PC-3 (cell line): ENCODE measurements at regions of chr12 and their contacts with region 1.

Region 1: DNA sequence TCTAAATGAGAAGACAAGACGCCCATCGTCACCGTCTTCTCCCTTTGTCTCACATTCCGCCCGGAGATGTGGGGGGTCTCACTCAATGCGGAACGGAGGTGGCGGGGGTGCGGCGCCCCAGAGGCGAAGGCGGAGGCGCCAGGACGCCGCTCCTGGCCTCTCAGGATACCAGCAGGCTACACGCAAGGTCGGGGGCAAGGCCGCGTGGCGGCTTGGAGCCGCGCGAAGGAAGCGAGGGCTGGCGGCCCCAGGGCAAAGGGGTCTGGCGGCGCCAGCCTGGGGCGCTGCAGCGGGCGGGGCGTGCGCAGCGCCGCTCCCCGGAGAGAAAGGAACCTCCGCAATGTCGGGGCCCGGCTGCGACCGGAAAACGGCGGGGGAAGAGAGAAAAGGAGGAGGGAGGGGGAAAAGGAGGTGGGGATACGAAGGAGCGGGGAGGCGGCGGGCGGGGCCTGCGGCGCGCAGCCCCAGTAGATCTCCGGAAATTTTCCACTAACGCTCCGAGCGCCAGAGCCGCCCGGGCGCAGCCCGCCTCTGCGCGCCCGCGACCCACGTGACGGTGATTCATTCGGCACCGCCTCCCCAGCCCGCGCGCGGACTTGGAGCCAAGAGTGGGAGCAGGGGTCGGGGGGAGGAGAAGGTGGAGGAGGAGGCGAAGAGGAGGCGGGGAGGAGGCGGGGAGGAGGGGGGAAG is 10.5 kb upstream of the SLC38A2 start:
- DNase-seq: peak; percentile 98
- ATAC-seq: peak; percentile 62
- H3K4me3 ChIP-seq: peak overlapping the region; percentile 77
- H3K27ac ChIP-seq: peak overlapping the region; percentile 94
- H3K4me1 ChIP-seq: peaks cover 44% of the 10 kb centered on the region
- H3K27me3 ChIP-seq: no peaks in the 10 kb centered on the region
- CTCF ChIP-seq: peak; percentile 40; the same call in 1 of the 2 replicates

Region 2: GRCh38 chr12:46268590-46269558 is 114.2 kb before region 1 on chr12 and contains the start of gene SLC38A1:
- CTCF ChIA-PET with region 1: no interaction called
- POLR2A ChIA-PET with region 1: interaction called, 14 read pairs
- intact Hi-C with region 1: no loop called
- DNase-seq: peak; percentile 91
- ATAC-seq: peak; percentile 68
- H3K4me3 ChIP-seq: peak within 1 kb of the TSS; percentile 85
- H3K27ac ChIP-seq: peak within 1 kb of the TSS; percentile 81
- H3K4me1 ChIP-seq: peaks cover 39% of the 10 kb centered on the region
- H3K27me3 ChIP-seq: no peaks in the 10 kb centered on the region
- CTCF ChIP-seq: no peak
- total RNA-seq, gene SLC38A1: 101 and 107 TPM in 2 replicates

Region 3: DNA sequence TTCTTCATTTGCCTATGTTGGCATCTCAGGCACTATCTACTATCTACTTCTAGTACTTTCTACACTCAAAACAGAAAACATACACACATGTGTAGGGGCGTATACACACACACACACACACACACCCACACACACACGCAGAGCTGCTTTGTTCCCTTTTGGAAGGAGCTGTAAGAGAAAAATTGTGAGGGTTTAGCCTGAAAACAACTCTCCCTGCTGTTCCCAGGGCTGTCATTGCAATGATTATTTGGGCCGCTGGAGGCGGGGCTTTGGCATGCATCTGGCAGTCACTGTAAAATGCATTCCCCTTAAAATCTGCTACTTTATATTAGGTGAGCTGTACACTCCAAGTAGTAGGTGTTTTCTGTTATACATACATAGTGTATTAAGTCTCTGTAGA is 18.6 kb after region 1 on chr12:
- CTCF ChIA-PET with region 1: no interaction called
- POLR2A ChIA-PET with region 1: interaction called, 9 read pairs
- intact Hi-C with region 1: loop called (anchors 2 kb)
- DNase-seq: no peak
- ATAC-seq: peak; percentile 33
- H3K4me3 ChIP-seq: no peak overlapping the region
- H3K27ac ChIP-seq: peak overlapping the region; percentile 40
- H3K4me1 ChIP-seq: peaks cover 28% of the 10 kb centered on the region
- H3K27me3 ChIP-seq: no peaks in the 10 kb centered on the region
- CTCF ChIP-seq: no peak

Region 4: GRCh38 chr12:46442239-46442638 is 59.1 kb after region 1 on chr12:
- CTCF ChIA-PET with region 1: no interaction called
- POLR2A ChIA-PET with region 1: interaction called, 12 read pairs
- intact Hi-C with region 1: loop called (anchors 1 kb)
- DNase-seq: peak; percentile 64
- ATAC-seq: peak; percentile 43
- H3K4me3 ChIP-seq: peak overlapping the region; percentile 50
- H3K27ac ChIP-seq: peak overlapping the region; percentile 97
- H3K4me1 ChIP-seq: peaks cover 75% of the 10 kb centered on the region
- H3K27me3 ChIP-seq: no peaks in the 10 kb centered on the region
- CTCF ChIP-seq: no peak

Region 5: DNA sequence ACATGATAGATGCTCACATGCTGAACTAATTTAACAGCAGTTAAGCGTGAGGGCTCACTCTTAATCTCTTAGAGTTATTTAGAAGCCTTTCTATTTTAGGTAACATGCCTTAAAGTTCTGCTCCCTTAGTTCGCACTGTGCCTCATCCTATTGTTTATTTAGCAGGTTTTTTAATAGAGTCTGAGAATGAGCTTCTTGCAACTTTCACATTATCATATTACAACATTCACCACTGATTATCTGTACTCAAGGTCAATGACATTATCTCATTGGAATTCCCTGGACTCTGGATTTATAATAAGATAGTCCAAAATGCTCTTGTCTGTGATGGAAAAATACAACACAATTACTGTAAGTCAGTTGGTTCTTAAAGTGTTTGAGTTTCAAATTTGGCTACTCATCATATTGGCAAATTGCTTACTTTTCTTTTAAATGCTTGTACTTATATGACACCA is 173.0 kb after region 1 on chr12:
- CTCF ChIA-PET with region 1: no interaction called
- POLR2A ChIA-PET with region 1: interaction called, 8 read pairs
- intact Hi-C with region 1: loop called (anchors 2 kb)
- DNase-seq: peak; percentile 93
- ATAC-seq: peak; percentile 76
- H3K4me3 ChIP-seq: peak overlapping the region; percentile 41
- H3K27ac ChIP-seq: peak overlapping the region; percentile 96
- H3K4me1 ChIP-seq: peaks cover 87% of the 10 kb centered on the region
- H3K27me3 ChIP-seq: no peaks in the 10 kb centered on the region
- CTCF ChIP-seq: no peak

Region 6: DNA sequence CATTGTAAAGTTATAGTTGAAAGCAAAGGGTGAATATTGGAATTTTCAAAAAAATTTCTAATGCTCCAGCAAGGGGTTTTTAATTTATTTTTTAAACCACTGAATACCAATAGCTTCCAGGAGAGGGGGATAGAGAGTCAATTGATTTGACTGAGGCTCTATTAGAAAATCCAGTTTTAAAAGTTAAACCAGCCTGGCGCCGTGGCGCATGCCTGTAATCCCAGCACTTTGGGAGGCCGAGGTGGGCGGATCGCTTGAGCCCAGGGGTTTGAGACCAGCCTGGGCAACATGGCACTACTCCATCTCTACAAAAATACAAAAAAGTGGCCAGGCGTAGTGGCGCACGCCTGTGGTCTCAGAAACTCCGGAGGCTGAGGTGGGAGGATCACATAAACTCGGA is 292.6 kb after region 1 on chr12:
- CTCF ChIA-PET with region 1: no interaction called
- POLR2A ChIA-PET with region 1: no interaction called
- intact Hi-C with region 1: loop called (anchors 5 kb)
- DNase-seq: peak; percentile 71
- ATAC-seq: no peak
- H3K4me3 ChIP-seq: no peak overlapping the region
- H3K27ac ChIP-seq: peak overlapping the region; percentile 68
- H3K4me1 ChIP-seq: peaks cover 44% of the 10 kb centered on the region
- H3K27me3 ChIP-seq: no peaks in the 10 kb centered on the region
- CTCF ChIP-seq: peak; percentile 65

Region 7: DNA sequence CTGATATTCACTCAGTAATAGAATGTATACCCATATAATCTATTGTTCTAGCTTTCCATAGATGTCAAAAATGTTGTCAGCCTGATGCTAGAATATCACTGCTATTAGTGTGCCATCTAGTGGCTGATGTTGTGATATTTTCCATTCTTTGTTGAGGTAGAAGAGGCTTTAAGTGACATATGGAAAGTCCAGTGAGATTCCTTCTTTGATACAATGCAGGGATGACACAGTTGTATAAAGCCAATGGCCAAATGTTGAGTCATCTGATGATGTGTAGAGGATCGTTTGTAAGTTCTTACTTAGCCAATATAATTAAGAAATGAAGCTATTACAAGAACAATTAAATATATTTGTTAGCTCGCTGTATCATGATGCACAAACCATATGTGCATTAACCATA is 638.2 kb after region 1 on chr12:
- CTCF ChIA-PET with region 1: no interaction called
- POLR2A ChIA-PET with region 1: no interaction called
- intact Hi-C with region 1: loop called (anchors 5 kb)
- DNase-seq: peak; percentile 97
- ATAC-seq: peak; percentile 62
- H3K4me3 ChIP-seq: no peak overlapping the region
- H3K27ac ChIP-seq: no peak overlapping the region
- H3K4me1 ChIP-seq: peaks cover 45% of the 10 kb centered on the region
- H3K27me3 ChIP-seq: no peaks in the 10 kb centered on the region
- CTCF ChIP-seq: peak; percentile 85